Activated CD4-positive, alpha-beta memory T cell treated with anti-CD3 and anti-CD28 coated beads for 36 hours (primary cell): ENCODE measurements at regions of chrX and their contacts with region 1.

Region 1: DNA sequence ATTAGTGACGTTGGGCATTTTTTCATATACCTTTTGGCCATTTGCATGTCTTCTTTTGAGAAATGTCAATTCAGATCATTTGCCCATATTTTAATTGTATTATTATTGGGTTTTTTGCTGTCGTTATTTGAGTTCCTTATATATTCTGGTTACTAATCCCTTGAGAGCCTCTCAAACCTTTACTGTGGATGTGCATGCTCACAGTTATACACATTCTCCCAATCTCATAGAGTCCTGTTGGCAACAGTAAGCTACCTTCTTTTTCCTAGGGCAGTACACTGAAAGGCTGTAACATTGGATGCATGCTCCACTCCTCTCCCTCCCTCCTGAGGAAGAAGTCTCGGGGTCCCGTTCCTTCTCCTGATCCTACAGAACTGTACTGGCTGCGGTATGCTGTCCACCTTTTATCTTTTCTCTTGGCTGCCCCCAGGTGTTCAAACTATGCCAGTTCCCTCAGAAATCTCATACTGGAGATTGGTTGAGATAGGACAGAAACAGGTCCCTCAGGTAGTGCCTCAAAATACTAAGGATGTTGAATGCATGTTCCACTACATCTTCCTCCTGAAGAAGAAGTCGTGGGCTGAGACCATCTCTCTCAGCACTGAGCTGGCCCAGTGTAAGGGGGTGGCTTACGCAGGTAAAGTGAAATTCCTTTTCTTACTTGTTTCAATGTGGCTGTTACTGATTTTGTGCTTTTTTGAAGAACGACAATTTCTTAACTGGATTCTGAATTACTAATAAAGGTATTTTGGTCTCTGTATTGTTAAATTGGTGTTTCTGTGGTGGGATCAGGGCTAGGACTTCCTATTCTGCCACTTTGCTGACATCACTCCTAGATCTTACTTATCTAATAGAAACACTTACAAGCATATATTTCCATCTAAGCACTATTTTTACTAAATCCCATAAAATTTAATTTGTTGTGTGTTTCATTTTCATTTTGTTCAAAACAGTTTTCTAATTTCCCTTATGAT is 145.4 kb upstream of the HUWE1 start:
- DNase-seq: peak; percentile 58
- H3K4me3 Mint-ChIP-seq: peak overlapping the region; percentile 61
- H3K27ac Mint-ChIP-seq: peak overlapping the region; percentile 81
- H3K4me1 Mint-ChIP-seq: peaks cover 34% of the 10 kb centered on the region
- H3K27me3 Mint-ChIP-seq: no peaks in the 10 kb centered on the region

Region 2: GRCh38 chrX:53732797-53733196 is 99.2 kb before region 1 on chrX:
- CTCF ChIA-PET with region 1: no interaction called
- POLR2A ChIA-PET with region 1: interaction called, 4 read pairs
- intact Hi-C with region 1: loop called (anchors 5 kb)
- DNase-seq: peak; percentile 56
- H3K4me3 Mint-ChIP-seq: peak overlapping the region; percentile 60
- H3K27ac Mint-ChIP-seq: peak overlapping the region; percentile 100
- H3K4me1 Mint-ChIP-seq: peaks cover 67% of the 10 kb centered on the region
- H3K27me3 Mint-ChIP-seq: no peaks in the 10 kb centered on the region

Region 3: DNA sequence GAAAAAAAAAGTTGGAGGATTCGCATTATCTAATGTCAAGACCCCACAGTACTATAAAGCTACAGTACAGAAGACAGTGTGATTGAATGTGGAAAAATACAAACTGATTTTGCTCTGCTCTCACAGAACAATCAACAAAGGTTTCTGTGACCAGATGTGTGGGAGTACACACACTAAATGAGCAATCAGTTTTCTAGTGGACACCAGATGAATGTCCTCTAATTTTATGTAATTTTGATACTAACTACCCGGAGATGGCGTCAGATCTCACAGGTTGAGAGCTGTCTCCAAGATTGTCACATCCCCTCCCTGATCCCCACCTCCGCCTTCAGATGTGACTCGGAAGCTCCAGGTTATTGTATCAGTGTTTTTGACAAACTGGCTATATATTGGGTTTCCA is 63.5 kb before region 1 on chrX:
- CTCF ChIA-PET with region 1: no interaction called
- POLR2A ChIA-PET with region 1: no interaction called
- intact Hi-C with region 1: no loop called
- DNase-seq: peak; percentile 30
- H3K4me3 Mint-ChIP-seq: no peak overlapping the region
- H3K27ac Mint-ChIP-seq: no peak overlapping the region
- H3K4me1 Mint-ChIP-seq: peaks cover 19% of the 10 kb centered on the region
- H3K27me3 Mint-ChIP-seq: no peaks in the 10 kb centered on the region

Region 4: DNA sequence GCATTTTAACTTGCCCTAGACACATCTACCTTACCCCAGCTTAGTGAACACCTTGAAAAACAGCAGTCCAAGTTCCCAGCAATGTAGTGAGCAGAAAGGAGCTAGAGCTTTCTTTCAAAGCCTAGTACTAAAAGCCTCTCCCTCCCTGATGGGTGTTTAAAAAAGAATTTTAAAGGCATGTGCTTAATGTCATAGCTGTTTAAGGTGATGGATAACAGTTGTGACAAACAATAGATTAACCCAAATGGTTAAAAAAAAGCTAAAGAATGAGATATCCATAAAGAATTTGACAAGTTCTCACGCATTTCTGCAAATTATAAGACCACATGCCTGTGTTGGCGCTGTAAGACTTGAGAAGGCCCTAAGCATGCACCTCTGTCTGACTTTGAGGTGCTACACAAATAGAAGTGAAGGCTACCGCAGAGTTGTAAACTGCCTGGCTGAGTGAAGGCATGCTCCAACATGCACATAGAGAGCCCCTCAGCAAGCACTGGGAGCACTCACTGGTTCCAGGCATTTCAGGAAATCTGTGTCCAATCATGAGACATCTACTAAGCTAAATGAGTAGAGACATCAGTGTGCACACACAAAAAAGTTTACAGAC is 118.3 kb after region 1 on chrX:
- CTCF ChIA-PET with region 1: no interaction called
- POLR2A ChIA-PET with region 1: no interaction called
- intact Hi-C with region 1: no loop called
- DNase-seq: no peak
- H3K4me3 Mint-ChIP-seq: no peak overlapping the region
- H3K27ac Mint-ChIP-seq: no peak overlapping the region
- H3K4me1 Mint-ChIP-seq: no peaks in the 10 kb centered on the region
- H3K27me3 Mint-ChIP-seq: no peaks in the 10 kb centered on the region